Colonic mucosa (tissue), 4 donors: ENCODE measurements at regions of chr5 and their contacts with region 1.

Region 1: DNA sequence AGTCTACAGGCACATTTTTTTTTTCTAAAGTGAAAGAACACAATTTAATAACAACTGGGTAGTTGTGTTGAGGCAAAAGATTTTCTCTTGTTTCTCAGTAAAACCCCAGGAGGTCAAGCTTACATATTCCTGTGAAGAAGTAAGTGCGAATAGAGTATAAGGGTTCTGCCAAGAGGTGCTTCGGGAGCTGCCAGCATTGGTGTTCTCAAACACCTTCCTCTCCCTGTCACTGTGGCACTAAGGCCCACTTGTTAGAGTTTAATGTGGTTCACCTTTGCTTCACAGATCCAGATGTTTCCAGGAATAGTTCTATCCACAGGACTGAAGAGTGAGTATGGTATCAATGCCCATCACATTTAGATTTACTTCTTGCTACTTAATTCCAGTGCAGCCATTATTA is 91.7 kb upstream of the C6 start:
- DNase-seq: no peak
- H3K4me3 ChIP-seq: no peak overlapping the region
- H3K27ac ChIP-seq: no peak overlapping the region
- H3K4me1 ChIP-seq: no peaks in the 10 kb centered on the region
- H3K27me3 ChIP-seq: no peaks in the 10 kb centered on the region
- CTCF ChIP-seq: no peak

Region 2: DNA sequence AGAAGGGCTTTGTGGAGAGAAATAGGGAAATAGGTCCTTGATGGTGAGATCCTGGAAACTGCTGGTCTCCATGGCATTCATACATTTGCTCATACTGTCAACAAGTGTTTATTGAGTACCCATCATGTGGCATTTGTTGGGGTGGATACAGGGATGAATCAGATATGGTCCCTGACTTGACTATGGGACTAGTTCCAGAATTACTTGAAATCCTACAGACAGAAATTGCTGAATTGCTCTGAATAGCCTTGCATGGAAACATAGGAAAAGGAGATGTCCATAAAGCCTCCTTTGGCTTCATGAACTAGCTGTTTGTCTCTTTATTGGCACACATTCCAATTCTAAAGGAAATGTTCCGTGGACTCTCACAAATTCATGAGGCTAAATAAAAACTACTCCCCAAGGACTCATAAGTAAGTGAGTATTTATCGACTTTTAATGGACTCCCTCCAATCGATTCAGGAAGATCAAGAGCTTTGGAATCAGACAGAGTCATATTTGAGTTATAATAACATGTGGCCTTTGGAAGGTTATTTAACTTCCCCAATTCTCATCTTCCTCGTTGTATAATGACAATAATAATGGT is 30.6 kb after region 1 on chr5:
- intact Hi-C with region 1: loop called (anchors 2 kb)
- DNase-seq: no peak
- H3K4me3 ChIP-seq: no peak overlapping the region
- H3K27ac ChIP-seq: no peak overlapping the region
- H3K4me1 ChIP-seq: no peaks in the 10 kb centered on the region
- H3K27me3 ChIP-seq: no peaks in the 10 kb centered on the region
- CTCF ChIP-seq: no peak